ENCODE measurements at regions of chr1 and their contacts with region 1.

Region 1: GRCh38 chr1:159798893-159799292 is 3.3 kb upstream of the FCRL6 start:
- DNase-seq: peak; percentile 36
- H3K4me3 ChIP-seq: no peak overlapping the region
- H3K27me3 ChIP-seq: peaks cover 11% of the 10 kb centered on the region
- CTCF ChIP-seq: peak; percentile 77

Region 2: DNA sequence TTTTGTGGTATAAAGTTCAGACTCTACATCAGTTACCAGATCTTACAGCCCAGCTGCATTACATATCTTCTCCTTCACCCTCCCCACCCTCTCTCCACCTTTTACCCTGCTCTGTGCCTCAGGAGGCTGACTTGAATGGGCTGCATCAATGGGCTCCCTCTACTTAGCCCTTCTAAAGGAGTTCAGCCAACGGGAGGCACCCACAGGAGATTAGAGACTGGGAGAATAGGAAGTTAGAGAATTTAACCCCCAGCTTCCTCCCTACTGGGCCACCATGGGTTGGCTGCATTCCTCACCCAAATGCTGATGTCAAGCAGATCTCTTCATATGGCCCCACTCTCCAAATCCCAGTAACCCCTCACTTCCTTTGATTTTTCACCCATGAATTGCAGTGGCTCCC is 35.2 kb before region 1 on chr1:
- CTCF ChIA-PET with region 1: no interaction called
- POLR2A ChIA-PET with region 1: no interaction called
- DNase-seq: no peak
- H3K4me3 ChIP-seq: no peak overlapping the region
- H3K27me3 ChIP-seq: no peaks in the 10 kb centered on the region
- CTCF ChIP-seq: no peak

Region 3: GRCh38 chr1:159780583-159781582 is 18.0 kb before region 1 on chr1 and contains the start of gene DUSP23:
- CTCF ChIA-PET with region 1: interaction called, 31 read pairs
- POLR2A ChIA-PET with region 1: no interaction called
- DNase-seq: peak; percentile 94
- H3K4me3 ChIP-seq: peak within 1 kb of the TSS; percentile 90
- H3K27me3 ChIP-seq: peaks cover 2% of the 10 kb centered on the region
- CTCF ChIP-seq: peak; percentile 97
- polyA plus RNA-seq, gene DUSP23: 16.0 and 22.8 TPM in 2 replicates

Region 4: DNA sequence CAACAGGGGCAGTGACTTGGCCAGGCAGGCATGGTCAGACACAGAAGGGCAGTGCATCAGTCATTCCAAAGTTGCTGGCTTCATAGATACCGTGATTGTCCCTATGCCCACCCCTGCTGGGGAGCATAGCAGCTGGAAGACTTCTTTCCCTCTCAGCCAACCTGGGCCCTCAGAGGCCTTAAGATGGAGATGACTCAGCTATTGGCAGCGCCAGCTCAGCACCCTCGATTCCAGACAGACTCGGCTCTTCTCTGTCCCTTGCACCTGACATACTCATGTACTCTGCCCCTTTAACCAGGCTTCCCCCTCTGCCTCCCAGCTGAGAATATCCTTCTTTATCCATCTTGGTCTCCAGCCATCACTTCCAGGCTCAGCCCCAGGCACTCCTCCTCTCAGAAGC is 44.6 kb after region 1 on chr1:
- CTCF ChIA-PET with region 1: interaction called, 13 read pairs
- POLR2A ChIA-PET with region 1: no interaction called
- DNase-seq: no peak
- H3K4me3 ChIP-seq: no peak overlapping the region
- H3K27me3 ChIP-seq: no peaks in the 10 kb centered on the region
- CTCF ChIP-seq: no peak

Region 5: DNA sequence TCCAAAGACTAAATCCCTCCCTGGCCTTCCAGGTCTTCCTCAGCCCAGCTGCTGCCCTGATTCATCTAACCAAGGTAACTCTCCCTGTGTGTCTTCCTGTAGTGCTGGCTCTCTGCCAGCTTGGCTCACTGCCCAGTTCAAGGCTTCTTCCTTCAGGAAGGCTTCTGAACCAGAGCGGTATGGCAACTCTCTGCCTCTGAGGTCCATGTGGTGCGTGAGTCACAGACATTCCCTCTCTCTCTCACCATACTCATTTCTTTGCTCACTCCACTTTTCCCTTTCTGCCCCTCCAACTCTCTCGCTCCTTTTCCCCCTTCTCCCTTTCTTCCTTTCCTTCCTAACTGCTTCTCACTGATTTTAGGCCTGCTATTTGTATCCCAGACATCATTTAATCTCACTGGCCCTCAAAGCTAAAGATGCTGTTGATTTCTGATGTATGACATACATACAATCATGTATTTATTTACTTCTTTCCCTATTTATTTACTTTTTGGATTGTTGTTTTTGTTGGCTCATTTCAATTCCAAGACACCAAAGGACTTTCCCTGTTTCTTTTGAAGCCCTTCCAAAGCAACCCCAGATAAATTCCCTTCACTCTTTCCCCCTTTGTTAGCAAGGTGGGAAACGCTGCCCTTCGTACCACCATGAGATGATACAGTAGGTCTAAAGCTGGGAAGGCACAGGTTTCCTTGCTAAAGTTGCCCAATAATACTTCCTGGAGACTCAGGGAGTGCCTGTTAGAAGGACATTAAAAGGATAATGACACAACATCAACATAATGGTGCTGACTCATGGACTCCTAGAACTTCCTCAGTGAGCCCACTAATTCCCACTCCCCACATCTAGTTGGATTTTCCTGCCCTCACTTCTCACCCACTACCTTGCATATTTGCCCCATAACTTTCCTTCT is 83.3 kb after region 1 on chr1:
- CTCF ChIA-PET with region 1: interaction called, 590 read pairs
- POLR2A ChIA-PET with region 1: no interaction called
- DNase-seq: peak; percentile 74
- H3K4me3 ChIP-seq: no peak overlapping the region
- H3K27me3 ChIP-seq: no peaks in the 10 kb centered on the region
- CTCF ChIP-seq: no peak

Region 6: DNA sequence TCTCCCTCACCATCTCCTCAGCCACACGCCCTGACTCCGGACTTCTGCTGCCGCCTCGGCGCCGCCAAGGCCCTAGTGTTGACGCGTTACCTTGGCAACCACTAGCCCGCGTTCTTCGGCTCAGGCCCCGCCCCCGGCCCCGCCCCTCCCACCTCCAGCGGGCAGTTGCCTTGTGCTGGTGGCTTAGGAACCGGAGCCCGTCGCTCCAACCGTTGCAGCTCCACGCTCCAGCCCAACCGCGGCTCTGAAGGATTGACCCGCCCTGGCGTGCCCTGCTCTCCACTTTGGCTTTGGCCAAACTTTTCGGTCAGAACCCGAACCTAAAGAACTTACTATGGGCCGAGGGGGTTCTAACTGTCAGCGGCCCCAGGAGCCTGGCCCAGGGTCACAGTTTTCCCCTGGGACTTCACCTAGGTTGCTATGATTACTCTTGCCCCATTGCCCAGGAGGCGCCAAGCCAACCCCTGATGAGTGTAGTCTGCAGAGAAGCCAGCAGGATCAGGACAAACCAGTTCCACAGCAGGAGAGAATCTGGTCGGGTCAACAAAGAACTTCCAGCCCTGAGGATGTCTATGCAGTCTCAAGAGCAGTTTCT is 101.3 kb after region 1 on chr1 and contains the start of gene CFAP45:
- CTCF ChIA-PET with region 1: interaction called, 590 read pairs
- POLR2A ChIA-PET with region 1: no interaction called
- DNase-seq: no peak
- H3K4me3 ChIP-seq: no peak within 1 kb of the TSS
- H3K27me3 ChIP-seq: no peaks in the 10 kb centered on the region
- CTCF ChIP-seq: no peak
- polyA plus RNA-seq, gene CFAP45: 0.56 TPM in 2 replicates

Measured in BJ (cell line).